Ascending aorta (tissue), 2 donors: ENCODE measurements at regions of chr20 and their contacts with region 1.

Region 1: GRCh38 chr20:324177-325044 is 941 bp upstream of the SOX12 start:
- DNase-seq: peak; percentile 76 to 95
- H3K4me3 ChIP-seq: peak overlapping the region; percentile 64 to 93
- H3K27ac ChIP-seq: peak overlapping the region; percentile 92 to 98
- H3K4me1 ChIP-seq: peaks cover 0 to 5% of the 10 kb centered on the region in 2 donors
- H3K27me3 ChIP-seq: no peaks in the 10 kb centered on the region
- CTCF ChIP-seq: peak in 2 of 3 experiments; percentile 31 to 36

Region 2: DNA sequence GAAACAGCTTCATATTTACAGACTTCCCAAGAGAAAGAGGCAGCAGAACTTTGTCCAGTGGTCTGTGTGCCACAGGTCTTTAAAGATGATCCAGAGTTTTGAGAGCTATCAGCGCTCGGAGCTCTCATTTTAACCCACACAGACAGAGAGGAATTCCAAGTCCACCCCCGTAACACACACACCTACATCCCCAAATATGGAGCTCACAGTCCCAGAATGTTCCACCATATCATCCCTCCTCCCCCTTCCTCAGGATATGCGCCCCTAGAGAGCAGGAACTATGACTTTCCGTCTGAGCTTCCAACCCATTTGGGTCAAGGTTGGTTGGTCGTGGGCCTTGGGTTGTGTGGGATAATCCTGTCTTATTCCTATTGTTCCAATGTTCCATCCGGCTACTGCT is 134.8 kb before region 1 on chr20 and contains the start of gene DEFB128:
- intact Hi-C with region 1: no loop called
- DNase-seq: no peak
- H3K4me3 ChIP-seq: no peak within 1 kb of the TSS
- H3K27ac ChIP-seq: no peak within 1 kb of the TSS
- H3K4me1 ChIP-seq: no peaks in the 10 kb centered on the region
- H3K27me3 ChIP-seq: no peaks in the 10 kb centered on the region
- CTCF ChIP-seq: no peak
- total RNA-seq, gene DEFB128: not detected

Region 3: GRCh38 chr20:290084-290831 is 34.2 kb before region 1 on chr20 and contains the start of gene C20orf96:
- intact Hi-C with region 1: loop called (anchors 1 kb)
- DNase-seq: peak; percentile 56 to 93
- H3K4me3 ChIP-seq: peak within 1 kb of the TSS; percentile 77 to 79
- H3K27ac ChIP-seq: peak within 1 kb of the TSS; percentile 69 to 71
- H3K4me1 ChIP-seq: peaks cover 5 to 9% of the 10 kb centered on the region in 2 donors
- H3K27me3 ChIP-seq: no peaks in the 10 kb centered on the region
- CTCF ChIP-seq: peak; percentile 35 to 54 (median 41)
- total RNA-seq, gene C20orf96: 0.32 TPM

Region 4: GRCh38 chr20:297098-297924 is 27.1 kb before region 1 on chr20 and contains the start of gene ZCCHC3:
- intact Hi-C with region 1: loop called (anchors 1 kb)
- DNase-seq: peak; percentile 62 to 91
- H3K4me3 ChIP-seq: peak within 1 kb of the TSS; percentile 74 to 86
- H3K27ac ChIP-seq: peak within 1 kb of the TSS; percentile 95 to 97
- H3K4me1 ChIP-seq: peaks cover 0 to 19% of the 10 kb centered on the region in 2 donors
- H3K27me3 ChIP-seq: no peaks in the 10 kb centered on the region
- CTCF ChIP-seq: peak in 1 of 3 experiments; percentile 18
- total RNA-seq, gene ZCCHC3: 15.6 TPM

Region 5: DNA sequence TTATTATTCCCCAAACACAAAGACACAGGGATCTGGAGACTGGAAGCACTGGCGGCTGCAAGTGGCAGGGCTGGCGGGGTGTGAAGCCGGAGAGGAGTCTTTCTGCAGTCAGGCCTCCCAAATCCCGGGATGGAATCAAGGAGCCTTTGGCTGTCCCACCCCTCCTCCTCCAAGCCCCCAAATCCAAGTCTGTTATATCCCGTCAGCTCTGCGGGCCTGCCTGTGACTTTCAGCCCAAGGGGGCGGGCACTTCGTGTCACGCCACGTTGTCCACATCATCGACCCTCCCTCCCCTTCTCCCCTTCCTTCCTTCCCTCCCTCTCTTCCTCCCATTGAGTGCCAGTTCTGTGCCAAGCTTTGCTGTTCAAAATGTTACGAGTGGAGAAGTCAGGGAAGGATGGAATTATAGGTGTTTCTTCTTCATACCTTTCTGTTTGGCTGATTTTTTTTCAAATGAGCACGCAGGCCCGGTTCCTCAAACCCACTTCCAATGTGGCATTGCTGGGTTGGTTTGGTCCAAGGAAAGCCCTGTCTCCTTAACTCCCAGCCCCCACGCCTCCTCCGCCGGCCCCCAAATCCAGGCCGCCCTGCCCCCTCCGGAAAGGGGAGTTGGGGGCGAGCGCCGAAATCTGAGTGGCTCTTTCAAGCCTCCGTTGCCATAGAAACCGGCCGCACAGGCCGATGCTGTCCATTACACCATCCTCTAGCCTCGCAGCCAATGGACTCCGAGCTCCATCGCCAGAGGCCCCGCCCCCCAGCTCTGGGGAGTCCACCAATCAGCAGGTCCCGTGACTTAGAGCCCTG is 14.4 kb before region 1 on chr20:
- intact Hi-C with region 1: loop called (anchors 1 kb)
- DNase-seq: peak; percentile 97 to 99
- H3K4me3 ChIP-seq: peak overlapping the region; percentile 50 to 66
- H3K27ac ChIP-seq: peak overlapping the region; percentile 89 to 95
- H3K4me1 ChIP-seq: no peaks in the 10 kb centered on the region
- H3K27me3 ChIP-seq: no peaks in the 10 kb centered on the region
- CTCF ChIP-seq: no peak

Region 6: GRCh38 chr20:347640-348484 is 23.5 kb after region 1 on chr20:
- intact Hi-C with region 1: loop called (anchors 1 kb)
- DNase-seq: peak; percentile 55 to 93
- H3K4me3 ChIP-seq: peak overlapping the region; percentile 67 to 83
- H3K27ac ChIP-seq: peak overlapping the region; percentile 84 to 90
- H3K4me1 ChIP-seq: peaks cover 0 to 6% of the 10 kb centered on the region in 2 donors
- H3K27me3 ChIP-seq: no peaks in the 10 kb centered on the region
- CTCF ChIP-seq: no peak

Region 7: DNA sequence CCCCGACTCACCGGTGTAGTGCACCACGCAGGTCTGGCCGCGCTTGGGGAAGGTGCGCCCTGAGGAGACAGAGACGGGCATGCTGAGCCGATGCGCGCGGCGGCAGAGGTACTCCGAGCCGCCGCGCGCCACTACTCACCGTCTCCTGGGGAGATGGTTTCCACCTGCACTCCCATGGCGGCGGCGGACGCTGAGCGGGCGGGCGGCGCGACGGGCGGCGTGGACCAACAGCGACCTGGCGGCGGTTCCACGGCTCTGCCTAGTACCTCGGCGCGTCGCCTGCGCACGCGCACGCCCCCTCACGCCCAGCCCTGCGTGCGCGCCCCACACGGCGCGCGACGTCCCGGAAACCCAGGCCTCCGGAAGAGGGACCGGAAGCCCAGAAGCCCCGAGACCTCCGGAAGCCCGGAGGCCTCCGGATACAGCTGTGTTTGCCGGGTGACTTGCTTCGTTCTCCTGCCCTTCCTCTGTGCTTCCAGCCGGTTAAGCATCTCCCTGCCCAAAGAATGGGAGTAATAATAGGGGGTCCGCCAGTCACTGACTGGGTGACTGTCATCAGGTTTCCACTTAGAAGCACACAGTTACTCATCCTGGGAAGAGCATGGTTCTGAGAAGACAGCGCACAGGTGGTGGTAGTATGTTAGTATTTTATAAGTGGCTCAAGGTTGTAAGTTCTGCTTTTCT is 1068.6 kb after region 1 on chr20 and contains the start of gene FKBP1A:
- intact Hi-C with region 1: loop called (anchors 10 kb)
- DNase-seq: peak; percentile 51 to 94
- H3K4me3 ChIP-seq: peak within 1 kb of the TSS; percentile 80 to 92
- H3K27ac ChIP-seq: peak within 1 kb of the TSS; percentile 84 to 86
- H3K4me1 ChIP-seq: peaks cover 13 to 41% of the 10 kb centered on the region in 2 donors
- H3K27me3 ChIP-seq: no peaks in the 10 kb centered on the region
- CTCF ChIP-seq: peak in 2 of 3 experiments; percentile 13 to 19
- total RNA-seq, gene FKBP1A: 202 TPM

Region 8: DNA sequence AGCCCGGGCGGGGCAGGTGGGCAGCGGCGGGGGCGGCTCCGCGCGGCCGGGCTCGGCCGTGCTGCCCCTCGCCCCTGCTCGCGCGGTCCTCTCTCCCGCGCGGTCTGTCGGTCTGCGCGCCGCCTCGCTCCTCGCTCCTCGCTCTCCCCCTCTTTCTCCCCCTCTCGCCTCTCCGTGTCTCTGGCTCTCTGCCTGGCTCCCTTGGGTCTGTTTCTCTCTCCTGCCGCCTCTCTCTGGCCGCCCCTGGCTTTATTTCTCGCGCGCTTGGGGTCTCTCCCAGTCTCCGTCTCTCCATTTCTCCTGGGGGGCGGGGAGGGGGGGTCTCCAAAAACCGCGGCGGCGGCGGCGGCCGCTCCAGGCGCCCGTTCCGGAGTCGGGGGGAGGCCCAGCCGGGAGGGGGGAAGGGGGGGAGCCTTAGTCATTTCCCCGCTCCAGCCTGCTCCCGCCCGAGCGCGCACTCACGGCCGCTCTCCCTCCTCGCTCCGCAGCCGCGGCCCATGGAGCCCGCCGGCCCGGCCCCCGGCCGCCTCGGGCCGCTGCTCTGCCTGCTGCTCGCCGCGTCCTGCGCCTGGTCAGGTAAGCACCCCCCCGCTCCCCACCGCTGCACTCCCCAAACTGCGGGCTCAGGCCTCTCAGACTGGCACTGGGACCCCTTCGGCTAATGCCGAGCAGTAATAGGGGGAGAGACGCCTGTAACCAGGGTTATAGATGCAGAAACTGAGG is 1570.7 kb after region 1 on chr20 and contains the start of gene SIRPA:
- intact Hi-C with region 1: loop called (anchors 10 kb)
- DNase-seq: peak in 1 of 2 donors; percentile 84
- H3K4me3 ChIP-seq: peak within 1 kb of the TSS; percentile 80 to 97
- H3K27ac ChIP-seq: peak within 1 kb of the TSS; percentile 97
- H3K4me1 ChIP-seq: peaks cover 6 to 66% of the 10 kb centered on the region in 2 donors
- H3K27me3 ChIP-seq: no peaks in the 10 kb centered on the region
- CTCF ChIP-seq: no peak
- total RNA-seq, gene SIRPA: 72.8 TPM